IMR-90 (cell line): ENCODE measurements at regions of chr1 and their contacts with region 1.

Region 1: GRCh38 chr1:95233737-95234500 is at the start of gene RWDD3:
- DNase-seq: peak; percentile 82
- ATAC-seq: peak; percentile 94
- H3K4me3 ChIP-seq: peak within 1 kb of the TSS; percentile 71
- H3K27ac ChIP-seq: peak within 1 kb of the TSS; percentile 85
- H3K4me1 ChIP-seq: peaks cover 6% of the 10 kb centered on the region
- H3K27me3 ChIP-seq: no peaks in the 10 kb centered on the region
- CTCF ChIP-seq: peak; percentile 96
- POLR2A ChIP-seq: peak; percentile 70; the same call in 1 of the 2 replicates
- RAD21 ChIP-seq: peak; percentile 75
- total RNA-seq, gene RWDD3: 10.4 and 10.6 TPM in 2 replicates

Region 2: DNA sequence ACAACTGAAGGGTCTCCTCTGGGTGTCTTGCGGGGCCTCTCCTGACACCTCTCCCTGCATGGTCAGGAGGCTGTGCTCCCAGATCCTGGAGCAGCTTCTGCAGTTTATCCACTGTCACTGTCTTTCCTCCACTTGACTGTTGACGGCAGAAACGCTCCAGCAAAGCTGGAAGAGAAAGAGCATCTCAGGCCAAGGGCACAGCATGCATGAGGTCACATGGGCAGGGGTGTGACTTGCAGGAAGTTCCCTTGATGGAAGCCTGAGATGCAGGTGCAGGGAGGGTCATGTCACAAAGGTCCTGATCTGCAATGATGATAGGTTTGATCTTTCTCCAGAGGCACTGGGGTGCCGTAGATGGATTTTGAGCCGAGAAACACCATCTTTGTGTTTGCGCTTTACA is 390.5 kb before region 1 on chr1:
- CTCF ChIA-PET with region 1: no interaction called
- POLR2A ChIA-PET with region 1: no interaction called
- dilution Hi-C with region 1: no loop called
- in situ Hi-C with region 1: loop called (anchors 10 kb)
- intact Hi-C with region 1: no loop called
- DNase-seq: no peak
- ATAC-seq: no peak
- H3K4me3 ChIP-seq: no peak overlapping the region
- H3K27ac ChIP-seq: no peak overlapping the region
- H3K4me1 ChIP-seq: no peaks in the 10 kb centered on the region
- H3K27me3 ChIP-seq: peaks cover 2% of the 10 kb centered on the region
- CTCF ChIP-seq: no peak
- POLR2A ChIP-seq: no peak
- RAD21 ChIP-seq: no peak

Region 3: GRCh38 chr1:94926915-94927404 is 307.0 kb before region 1 on chr1 and contains the start of gene CNN3:
- CTCF ChIA-PET with region 1: no interaction called
- POLR2A ChIA-PET with region 1: no interaction called
- dilution Hi-C with region 1: no loop called
- in situ Hi-C with region 1: no loop called
- intact Hi-C with region 1: loop called (anchors 10 kb)
- DNase-seq: peak; percentile 92
- ATAC-seq: peak; percentile 91
- H3K4me3 ChIP-seq: peak within 1 kb of the TSS; percentile 63
- H3K27ac ChIP-seq: peak within 1 kb of the TSS; percentile 93
- H3K4me1 ChIP-seq: peaks cover 23% of the 10 kb centered on the region
- H3K27me3 ChIP-seq: no peaks in the 10 kb centered on the region
- CTCF ChIP-seq: peak; percentile 9; the same call in 1 of the 2 replicates
- POLR2A ChIP-seq: peak; percentile 97
- RAD21 ChIP-seq: peak; percentile 17; the same call in 1 of the 2 replicates
- total RNA-seq, gene CNN3: 552 and 592 TPM in 2 replicates

Region 4: GRCh38 chr1:95049935-95050334 is 184.0 kb before region 1 on chr1:
- CTCF ChIA-PET with region 1: no interaction called
- POLR2A ChIA-PET with region 1: no interaction called
- dilution Hi-C with region 1: no loop called
- in situ Hi-C with region 1: no loop called
- intact Hi-C with region 1: no loop called
- DNase-seq: no peak
- ATAC-seq: no peak
- H3K4me3 ChIP-seq: no peak overlapping the region
- H3K27ac ChIP-seq: no peak overlapping the region
- H3K4me1 ChIP-seq: no peaks in the 10 kb centered on the region
- H3K27me3 ChIP-seq: no peaks in the 10 kb centered on the region
- CTCF ChIP-seq: no peak
- POLR2A ChIP-seq: no peak
- RAD21 ChIP-seq: no peak

Region 5: DNA sequence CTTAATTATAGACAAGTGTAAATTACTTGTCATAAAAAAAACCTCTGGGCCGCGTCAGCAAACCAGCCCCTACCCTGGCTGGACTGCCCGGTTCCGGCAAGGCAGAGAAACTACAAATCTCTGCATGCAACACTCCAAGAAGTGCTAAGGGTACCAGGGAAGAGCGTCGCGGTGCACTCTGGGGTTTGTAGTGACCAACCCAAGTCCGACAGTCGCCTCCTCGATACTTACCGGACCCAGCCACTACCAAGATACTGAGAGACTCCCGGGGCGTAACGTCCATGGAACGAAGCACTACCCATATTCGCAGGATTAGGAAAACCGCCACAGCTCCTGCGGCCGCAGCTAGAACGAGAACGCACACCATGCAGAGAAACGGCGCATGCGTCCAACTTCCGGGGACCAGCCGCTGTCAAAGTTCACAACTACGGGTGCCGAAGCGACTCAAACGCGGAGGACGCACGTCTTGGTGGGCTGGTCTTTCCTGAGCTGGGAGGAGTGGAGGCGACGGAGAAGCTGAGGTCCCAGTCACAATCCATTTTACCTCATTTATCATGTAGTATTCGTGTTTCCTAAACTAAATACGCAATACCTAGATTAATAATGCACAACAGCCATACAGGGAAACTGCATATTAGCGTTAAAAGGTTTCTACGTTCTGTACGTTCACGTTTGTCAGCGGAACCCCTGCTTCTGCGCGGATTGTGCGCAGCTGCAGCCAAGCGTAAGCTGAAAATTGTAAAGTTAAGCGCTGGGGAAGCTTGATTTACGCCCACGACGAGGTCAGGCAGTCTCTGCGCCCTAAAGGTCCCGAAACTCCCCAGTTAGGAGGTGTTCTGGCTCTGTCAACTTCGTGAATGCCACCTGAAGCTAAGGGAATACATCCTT is 161.1 kb before region 1 on chr1 and contains the start of gene ALG14:
- CTCF ChIA-PET with region 1: interaction called, 13 read pairs
- POLR2A ChIA-PET with region 1: interaction called, 9 read pairs
- dilution Hi-C with region 1: no loop called
- in situ Hi-C with region 1: no loop called
- intact Hi-C with region 1: loop called (anchors 1 kb)
- DNase-seq: peak; percentile 96
- ATAC-seq: peak; percentile 98
- H3K4me3 ChIP-seq: peak within 1 kb of the TSS; percentile 67
- H3K27ac ChIP-seq: peak within 1 kb of the TSS; percentile 97
- H3K4me1 ChIP-seq: peaks cover 2% of the 10 kb centered on the region; the same call in 1 of the 2 replicates
- H3K27me3 ChIP-seq: no peaks in the 10 kb centered on the region
- CTCF ChIP-seq: no peak
- POLR2A ChIP-seq: peak; percentile 34; the same call in 1 of the 2 replicates
- RAD21 ChIP-seq: no peak; the same call in 1 of the 2 replicates
- total RNA-seq, gene ALG14: 1.4 and 2.0 TPM in 2 replicates

Region 6: GRCh38 chr1:95116580-95117206 is 117.2 kb before region 1 on chr1:
- CTCF ChIA-PET with region 1: interaction called, 7 read pairs
- POLR2A ChIA-PET with region 1: no interaction called
- dilution Hi-C with region 1: no loop called
- in situ Hi-C with region 1: no loop called
- intact Hi-C with region 1: loop called (anchors 2 kb)
- DNase-seq: peak; percentile 22
- ATAC-seq: peak; percentile 42
- H3K4me3 ChIP-seq: peak overlapping the region; percentile 66
- H3K27ac ChIP-seq: no peak overlapping the region
- H3K4me1 ChIP-seq: no peaks in the 10 kb centered on the region
- H3K27me3 ChIP-seq: peaks cover 30% of the 10 kb centered on the region
- CTCF ChIP-seq: peak; percentile 35
- POLR2A ChIP-seq: no peak
- RAD21 ChIP-seq: peak; percentile 27; the same call in 1 of the 2 replicates

Region 7: DNA sequence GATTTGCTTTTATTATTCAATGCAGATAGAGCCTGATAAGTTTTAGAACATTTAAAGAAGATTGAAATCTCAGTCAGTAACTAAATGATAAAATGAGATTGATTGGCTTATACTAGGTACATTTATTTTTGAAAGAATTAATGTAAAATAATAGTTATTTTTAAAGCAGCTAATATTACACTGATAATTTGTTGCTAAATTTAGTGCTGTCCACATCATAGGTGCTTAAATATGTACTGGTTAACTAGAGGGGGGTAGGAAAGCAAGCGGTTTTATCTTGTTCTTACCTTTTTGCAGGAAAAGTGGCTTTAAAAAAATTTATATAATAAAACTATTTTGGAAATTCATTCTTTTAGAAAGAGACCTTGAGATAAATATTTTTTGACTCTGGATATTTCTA is 40.3 kb before region 1 on chr1:
- CTCF ChIA-PET with region 1: no interaction called
- POLR2A ChIA-PET with region 1: no interaction called
- dilution Hi-C with region 1: no loop called
- in situ Hi-C with region 1: no loop called
- intact Hi-C with region 1: no loop called
- DNase-seq: no peak
- ATAC-seq: no peak
- H3K4me3 ChIP-seq: no peak overlapping the region
- H3K27ac ChIP-seq: no peak overlapping the region
- H3K4me1 ChIP-seq: no peaks in the 10 kb centered on the region; the same call in 1 of the 2 replicates
- H3K27me3 ChIP-seq: no peaks in the 10 kb centered on the region
- CTCF ChIP-seq: no peak
- POLR2A ChIP-seq: no peak
- RAD21 ChIP-seq: no peak

Region 8: DNA sequence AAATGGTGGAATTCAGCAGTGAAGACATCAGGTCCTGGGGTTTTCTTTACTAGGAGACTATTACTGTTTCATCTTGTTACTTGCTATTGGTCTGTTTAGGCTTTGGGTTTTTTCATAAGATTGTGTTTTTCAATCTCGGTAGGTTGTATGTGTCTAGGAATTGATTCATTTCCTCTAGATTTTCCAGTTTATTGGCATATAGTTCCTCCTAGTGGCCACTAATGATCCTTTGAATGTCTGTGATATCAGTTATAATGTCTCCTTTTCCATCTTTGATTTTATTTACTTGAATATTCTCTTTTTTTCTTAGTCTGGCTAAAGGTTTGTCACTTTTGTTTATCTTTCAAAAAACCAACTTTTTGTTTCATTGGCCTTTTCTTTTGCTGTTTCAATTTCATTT is 233.1 kb after region 1 on chr1:
- CTCF ChIA-PET with region 1: no interaction called
- POLR2A ChIA-PET with region 1: no interaction called
- dilution Hi-C with region 1: no loop called
- in situ Hi-C with region 1: no loop called
- intact Hi-C with region 1: no loop called
- DNase-seq: no peak
- ATAC-seq: no peak
- H3K4me3 ChIP-seq: no peak overlapping the region
- H3K27ac ChIP-seq: no peak overlapping the region
- H3K4me1 ChIP-seq: no peaks in the 10 kb centered on the region
- H3K27me3 ChIP-seq: no peaks in the 10 kb centered on the region
- CTCF ChIP-seq: 0 out of 2 replicates have a peak, but pooled peaks have one; percentile 25
- POLR2A ChIP-seq: no peak
- RAD21 ChIP-seq: 0 out of 2 replicates have a peak, but pooled peaks have one; percentile 7